ENCODE measurements at regions of chr1 and their contacts with region 1.

Region 1: GRCh38 chr1:185156854-185157598 is at the starts of genes SWT1 and TRMT1L:
- DNase-seq: peak; percentile 90 to 99 (median 97)
- ATAC-seq: peak; percentile 88 to 91
- H3K4me3 Mint-ChIP-seq: peak within 1 kb of the TSS; percentile 90 to 99 (median 98)
- H3K27ac Mint-ChIP-seq: peak within 1 kb of the TSS; percentile 94 to 99 (median 98)
- H3K4me1 Mint-ChIP-seq: peaks cover 23 to 53% (median 43%) of the 10 kb centered on the region in 4 donors
- H3K27me3 Mint-ChIP-seq: no peaks in the 10 kb centered on the region
- polyA plus RNA-seq, gene SWT1: 3.3 to 6.5 (median 4.2) TPM
- polyA plus RNA-seq, gene TRMT1L: 10.8 to 17.4 (median 14.1) TPM

Region 2: GRCh38 chr1:184754476-184755225 is 402.4 kb before region 1 on chr1 and contains the start of gene EDEM3:
- POLR2A ChIA-PET with region 1: interaction called, 16 read pairs
- DNase-seq: peak; percentile 87 to 99 (median 98)
- ATAC-seq: peak; percentile 91 to 93
- H3K4me3 Mint-ChIP-seq: peak within 1 kb of the TSS; percentile 89 to 97 (median 92)
- H3K27ac Mint-ChIP-seq: peak within 1 kb of the TSS; percentile 87 to 97 (median 93)
- H3K4me1 Mint-ChIP-seq: peaks cover 15 to 46% (median 33%) of the 10 kb centered on the region in 4 donors
- H3K27me3 Mint-ChIP-seq: peaks cover 0 to 9% (median 2%) of the 10 kb centered on the region in 5 donors
- polyA plus RNA-seq, gene EDEM3: 8.8 to 14.1 (median 12.5) TPM

Region 3: DNA sequence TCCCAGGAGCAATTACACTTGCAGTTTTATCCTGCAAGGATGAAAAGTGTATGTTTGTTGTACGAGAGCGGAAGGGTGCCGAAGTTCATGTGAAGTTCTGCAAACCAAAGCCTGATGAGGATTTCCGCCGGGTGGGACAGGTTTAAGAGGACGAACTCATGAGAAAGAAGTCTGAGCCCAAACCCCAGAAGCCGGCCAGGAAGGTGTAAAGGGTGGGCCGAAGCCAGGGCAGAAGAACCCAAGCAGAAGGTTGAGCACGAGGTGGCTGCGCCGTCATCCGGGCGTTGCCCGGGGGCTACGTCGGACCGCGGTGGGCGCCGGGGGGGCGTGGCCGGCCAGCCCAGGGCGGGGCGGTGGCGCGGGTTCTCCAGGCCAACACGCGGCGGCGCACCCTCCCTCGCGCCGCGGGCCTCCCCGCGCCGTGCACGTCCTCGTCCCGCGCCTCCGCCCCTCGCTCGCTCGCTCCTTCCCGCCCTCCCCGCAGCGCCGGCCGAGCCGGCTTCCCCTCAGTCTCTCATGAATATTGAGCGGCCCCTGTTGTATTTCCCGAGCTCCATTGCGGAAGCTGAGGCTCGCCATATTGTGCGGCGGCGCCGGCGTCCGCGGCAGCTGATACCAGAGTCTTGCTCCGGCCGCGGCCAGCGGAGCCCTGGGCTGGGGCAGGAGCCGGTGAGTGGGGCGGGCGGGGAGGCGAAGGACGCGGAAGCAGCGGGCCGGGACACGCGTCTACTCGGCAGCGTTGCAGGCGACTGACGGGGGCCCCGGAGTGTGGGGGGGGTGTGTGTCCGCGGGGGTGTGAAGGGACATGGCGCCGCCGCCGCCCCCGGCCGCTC is 111.8 kb before region 1 on chr1 and contains the start of gene RNF2:
- POLR2A ChIA-PET with region 1: interaction called, 25 read pairs
- DNase-seq: peak; percentile 74 to 89 (median 80)
- ATAC-seq: peak; percentile 88 to 89
- H3K4me3 Mint-ChIP-seq: peak within 1 kb of the TSS; percentile 87 to 97 (median 94)
- H3K27ac Mint-ChIP-seq: peak within 1 kb of the TSS; percentile 81 to 98 (median 94)
- H3K4me1 Mint-ChIP-seq: peaks cover 25 to 51% (median 47%) of the 10 kb centered on the region in 4 donors
- H3K27me3 Mint-ChIP-seq: no peaks in the 10 kb centered on the region
- polyA plus RNA-seq, gene RNF2: 18.5 to 32.6 (median 22.3) TPM

Region 4: DNA sequence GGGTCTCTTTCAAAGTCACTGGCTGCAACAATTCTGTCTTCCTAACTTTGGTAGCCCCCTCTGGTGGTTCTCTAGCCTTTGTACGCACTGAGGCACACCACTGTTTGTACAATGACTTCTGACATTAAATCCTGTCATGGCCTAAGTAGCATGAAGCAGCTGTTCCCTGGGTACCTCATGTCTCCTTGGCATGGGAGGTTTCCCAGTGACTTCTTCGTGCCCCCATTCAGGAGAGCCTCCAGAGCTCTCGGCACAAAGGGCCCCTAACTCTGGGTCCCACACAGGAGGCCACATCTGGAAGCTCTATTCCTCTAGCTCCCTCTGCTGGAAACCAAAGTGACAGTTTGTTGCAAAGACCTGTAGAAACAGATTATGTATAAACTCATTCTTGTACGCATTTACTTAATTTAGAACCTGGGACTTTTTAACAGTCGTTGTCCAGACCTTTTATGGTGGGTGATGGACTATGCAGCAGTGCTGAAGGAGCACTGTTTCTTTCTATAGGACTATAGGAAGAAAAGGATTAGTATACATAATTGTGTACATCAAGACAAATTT is 13.3 kb after region 1 on chr1:
- POLR2A ChIA-PET with region 1: interaction called, 14 read pairs
- DNase-seq: peak; percentile 7 to 75 (median 46)
- ATAC-seq: peak; percentile 94
- H3K4me3 Mint-ChIP-seq: peak overlapping the region in 9 of 10 donors; percentile 10 to 76 (median 58)
- H3K27ac Mint-ChIP-seq: peak overlapping the region in 7 of 10 donors; percentile 53 to 83 (median 77)
- H3K4me1 Mint-ChIP-seq: peaks cover 2 to 6% (median 5%) of the 10 kb centered on the region in 4 donors
- H3K27me3 Mint-ChIP-seq: no peaks in the 10 kb centered on the region

Measured in naive thymus-derived CD8-positive, alpha-beta T cell (primary cell).